ENCODE measurements at regions of chr14 and their contacts with region 1.

Region 1: DNA sequence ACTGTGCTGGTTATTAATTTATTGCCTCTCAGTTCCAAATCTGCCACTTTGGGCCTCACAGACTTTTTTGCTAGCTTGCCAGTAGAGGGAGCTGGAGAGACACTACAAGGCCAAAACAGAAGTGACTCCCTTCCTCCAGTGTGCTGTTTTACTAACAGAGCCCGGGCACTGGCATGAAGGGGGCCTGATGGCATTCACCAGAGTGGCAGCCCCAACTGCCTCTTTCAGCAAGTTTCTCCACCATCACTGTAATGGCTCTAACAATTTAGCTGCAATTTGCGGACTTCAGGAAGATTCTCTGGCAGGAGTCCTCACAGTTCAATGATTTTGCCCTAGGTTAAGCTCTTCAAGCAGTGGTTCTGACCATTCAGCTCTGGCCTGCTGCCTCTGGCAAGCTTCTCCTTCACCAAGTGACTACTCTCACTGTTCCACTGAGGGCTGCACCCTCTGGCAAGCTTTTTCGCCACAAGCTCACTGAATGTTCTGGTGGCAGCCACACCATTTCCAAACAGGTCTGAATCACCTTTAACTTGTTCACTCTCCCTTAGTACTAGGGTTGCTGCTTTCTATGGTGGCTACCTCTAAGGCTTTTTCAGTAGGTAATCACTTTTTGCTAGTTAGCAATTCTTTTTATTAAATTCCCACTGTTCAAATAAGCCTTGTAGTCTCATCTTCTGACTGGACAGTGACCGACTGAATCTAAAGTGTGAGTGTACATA is 104.9 kb downstream of the ZC3H14 start:
- DNase-seq: peak; percentile 45
- H3K4me3 ChIP-seq: no peak overlapping the region
- CTCF ChIP-seq: peak; percentile 87

Region 2: GRCh38 chr14:88639221-88639620 is 28.5 kb before region 1 on chr14:
- CTCF ChIA-PET with region 1: interaction called, 11 read pairs
- POLR2A ChIA-PET with region 1: no interaction called
- DNase-seq: no peak
- H3K4me3 ChIP-seq: no peak overlapping the region
- CTCF ChIP-seq: no peak

Region 3: GRCh38 chr14:88695870-88696269 is 28.2 kb after region 1 on chr14:
- CTCF ChIA-PET with region 1: interaction called, 10 read pairs
- POLR2A ChIA-PET with region 1: no interaction called
- DNase-seq: peak; percentile 23
- H3K4me3 ChIP-seq: no peak overlapping the region
- CTCF ChIP-seq: no peak

Region 4: DNA sequence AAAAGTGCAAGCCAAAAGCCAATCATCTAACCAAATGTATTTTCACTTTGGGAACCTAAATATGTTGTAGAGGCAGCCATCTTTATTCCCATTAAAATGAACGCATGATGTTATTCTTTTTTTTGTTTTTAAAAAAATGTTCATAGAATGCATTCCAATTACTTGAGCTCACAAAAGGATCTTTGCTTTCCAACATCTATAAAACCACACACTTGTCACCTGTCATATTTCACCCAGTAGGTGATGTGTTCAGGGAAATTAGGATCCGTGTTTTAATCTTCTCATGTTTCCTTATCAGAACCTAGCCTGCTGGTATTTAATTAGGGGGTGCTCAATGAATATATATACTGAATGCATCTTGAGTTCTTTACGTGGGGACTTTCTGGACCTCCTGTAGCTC is 170.3 kb after region 1 on chr14:
- CTCF ChIA-PET with region 1: interaction called, 10 read pairs
- POLR2A ChIA-PET with region 1: no interaction called
- DNase-seq: no peak
- H3K4me3 ChIP-seq: no peak overlapping the region
- CTCF ChIP-seq: no peak

Region 5: GRCh38 chr14:89007906-89008305 is 340.2 kb after region 1 on chr14:
- CTCF ChIA-PET with region 1: interaction called, 13 read pairs
- POLR2A ChIA-PET with region 1: no interaction called
- DNase-seq: no peak
- H3K4me3 ChIP-seq: no peak overlapping the region
- CTCF ChIP-seq: no peak

Region 6: GRCh38 chr14:89027097-89027740 is 359.5 kb after region 1 on chr14:
- CTCF ChIA-PET with region 1: interaction called, 24 read pairs
- POLR2A ChIA-PET with region 1: no interaction called
- DNase-seq: no peak
- H3K4me3 ChIP-seq: peak overlapping the region; percentile 69
- CTCF ChIP-seq: peak; percentile 71